Right ventricle myocardium inferior (tissue), 1 donor: ENCODE measurements at regions of chr3 and their contacts with region 1.

Region 1: GRCh38 chr3:20080956-20081554 is 40.8 kb downstream of the KAT2B start:
- DNase-seq: peak; percentile 85
- ATAC-seq: peak; percentile 99

Region 2: GRCh38 chr3:20054549-20054987 is 26.5 kb before region 1 on chr3:
- intact Hi-C with region 1: loop called (anchors 1 kb)
- DNase-seq: no peak
- ATAC-seq: peak; percentile 77

Region 3: DNA sequence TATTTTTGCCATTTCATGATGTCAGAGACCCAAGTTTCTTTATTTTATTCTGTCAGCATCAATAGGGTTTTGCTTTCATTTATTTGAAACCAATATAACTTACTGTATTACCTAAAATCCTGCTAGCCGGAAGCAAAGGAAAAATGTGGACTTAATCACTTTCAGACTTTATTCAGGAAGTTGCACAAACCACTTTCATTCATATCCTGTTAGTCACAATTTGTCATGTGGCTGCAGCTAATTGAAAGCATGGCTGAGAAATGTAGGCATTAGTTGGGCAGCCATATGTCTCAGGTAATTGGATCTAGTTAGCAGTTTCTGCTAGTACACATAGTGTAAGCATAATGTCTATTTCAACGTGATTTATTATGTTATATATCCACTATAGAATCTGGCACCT is 567.2 kb after region 1 on chr3:
- intact Hi-C with region 1: no loop called
- DNase-seq: no peak
- ATAC-seq: no peak